WTC11 (cell line): ENCODE measurements at regions of chr16 and their contacts with region 1.

Region 1: DNA sequence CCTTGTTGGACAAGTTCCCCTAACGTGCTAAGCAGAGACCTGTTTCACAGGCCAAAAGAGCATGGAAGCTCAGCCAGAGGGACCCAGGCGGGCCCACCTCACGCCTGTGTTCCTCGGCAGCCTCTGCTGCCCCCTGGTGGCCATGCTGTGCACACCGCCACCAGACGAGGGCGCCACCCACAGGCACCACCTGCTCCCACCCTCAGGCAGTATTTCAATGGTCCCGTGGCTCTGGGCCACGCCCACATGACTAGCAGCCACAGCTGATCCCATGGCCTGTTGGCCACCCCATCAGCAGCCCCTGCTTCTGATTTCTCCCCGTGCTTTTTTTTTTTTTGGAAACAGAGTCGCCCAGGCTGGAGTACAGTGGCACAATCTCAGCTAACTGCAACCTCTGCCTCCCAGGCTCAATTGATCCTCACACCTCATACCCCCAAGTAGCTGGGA is 18.9 kb downstream of the MPG start:
- DNase-seq: peak; percentile 95
- ATAC-seq: peak; percentile 91
- H3K4me3 Mint-ChIP-seq: no peak overlapping the region
- H3K27ac Mint-ChIP-seq: no peak overlapping the region
- H3K4me1 Mint-ChIP-seq: no peaks in the 10 kb centered on the region; the same call in 1 of the 2 replicates
- H3K27me3 Mint-ChIP-seq: no peaks in the 10 kb centered on the region
- CTCF ChIP-seq: peak; percentile 100

Region 2: DNA sequence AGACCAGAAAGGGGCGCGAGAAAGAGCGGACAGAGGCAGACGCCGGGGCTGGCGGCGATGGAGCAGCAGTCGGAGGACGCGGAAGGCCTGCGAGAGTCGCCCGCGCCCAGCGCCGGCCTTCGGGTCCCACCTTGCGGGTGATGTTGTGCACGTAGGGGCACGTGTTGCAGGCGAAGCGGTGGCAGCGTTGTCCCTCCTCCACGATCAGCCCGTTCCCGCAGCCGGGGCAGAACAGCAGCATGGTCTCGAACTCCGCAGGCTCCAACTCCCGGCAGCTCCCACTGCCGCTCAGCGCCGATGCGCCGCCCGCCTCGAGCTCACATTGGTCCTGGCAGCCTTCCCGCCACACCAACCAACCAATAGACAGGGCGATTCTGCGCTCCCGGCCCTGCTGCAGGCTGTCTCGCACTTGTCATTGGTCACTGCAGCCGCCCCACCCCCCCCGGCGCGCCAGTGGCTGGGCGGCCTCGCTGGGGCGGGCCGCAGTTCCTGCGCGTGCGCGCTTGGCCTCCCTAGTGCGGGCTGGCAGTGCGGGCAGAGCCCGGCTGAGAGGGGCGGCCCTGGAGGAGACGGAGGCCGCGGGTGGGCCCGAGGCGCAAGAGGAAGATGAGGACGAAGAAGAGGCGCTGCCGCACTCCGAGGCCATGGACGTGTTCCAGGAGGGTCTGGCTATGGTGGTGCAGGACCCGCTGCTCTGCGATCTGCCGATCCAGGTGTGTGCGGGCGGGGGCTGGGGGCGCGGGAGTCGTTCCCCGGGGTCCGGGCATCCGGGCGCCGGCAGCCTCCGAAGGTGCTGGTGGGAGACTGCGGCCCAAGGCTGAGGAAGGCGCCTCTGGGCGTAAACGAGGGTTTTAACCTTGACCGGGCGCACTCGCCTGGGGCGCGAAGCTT is 43.4 kb before region 1 on chr16 and contains the starts of genes POLR3K and SNRNP25:
- CTCF ChIA-PET with region 1: interaction called, 25 read pairs
- POLR2A ChIA-PET with region 1: no interaction called
- DNase-seq: peak; percentile 98
- ATAC-seq: peak; percentile 98
- H3K4me3 Mint-ChIP-seq: peak within 1 kb of the TSS; percentile 99
- H3K27ac Mint-ChIP-seq: peak within 1 kb of the TSS; percentile 99
- H3K4me1 Mint-ChIP-seq: peaks cover 13% of the 10 kb centered on the region
- H3K27me3 Mint-ChIP-seq: no peaks in the 10 kb centered on the region; the same call in 1 of the 2 replicates
- CTCF ChIP-seq: no peak
- total RNA-seq, gene POLR3K: 37.9 to 40.1 TPM (median 38.6 TPM) in 3 replicates
- total RNA-seq, gene SNRNP25: 51.6 to 55.9 TPM (median 54.7 TPM) in 3 replicates

Region 3: GRCh38 chr16:77807-78443 is 19.0 kb before region 1 on chr16 and contains the start of gene MPG:
- CTCF ChIA-PET with region 1: interaction called, 493 read pairs
- POLR2A ChIA-PET with region 1: interaction called, 6 read pairs
- DNase-seq: peak; percentile 75
- ATAC-seq: peak; percentile 49
- H3K4me3 Mint-ChIP-seq: peak within 1 kb of the TSS; percentile 82
- H3K27ac Mint-ChIP-seq: no peak within 1 kb of the TSS; the same call in 1 of the 2 replicates
- H3K4me1 Mint-ChIP-seq: peaks cover 54% of the 10 kb centered on the region
- H3K27me3 Mint-ChIP-seq: no peaks in the 10 kb centered on the region; the same call in 1 of the 2 replicates
- CTCF ChIP-seq: no peak
- total RNA-seq, gene MPG: 60.0 to 62.0 TPM (median 60.0 TPM) in 3 replicates

Region 4: DNA sequence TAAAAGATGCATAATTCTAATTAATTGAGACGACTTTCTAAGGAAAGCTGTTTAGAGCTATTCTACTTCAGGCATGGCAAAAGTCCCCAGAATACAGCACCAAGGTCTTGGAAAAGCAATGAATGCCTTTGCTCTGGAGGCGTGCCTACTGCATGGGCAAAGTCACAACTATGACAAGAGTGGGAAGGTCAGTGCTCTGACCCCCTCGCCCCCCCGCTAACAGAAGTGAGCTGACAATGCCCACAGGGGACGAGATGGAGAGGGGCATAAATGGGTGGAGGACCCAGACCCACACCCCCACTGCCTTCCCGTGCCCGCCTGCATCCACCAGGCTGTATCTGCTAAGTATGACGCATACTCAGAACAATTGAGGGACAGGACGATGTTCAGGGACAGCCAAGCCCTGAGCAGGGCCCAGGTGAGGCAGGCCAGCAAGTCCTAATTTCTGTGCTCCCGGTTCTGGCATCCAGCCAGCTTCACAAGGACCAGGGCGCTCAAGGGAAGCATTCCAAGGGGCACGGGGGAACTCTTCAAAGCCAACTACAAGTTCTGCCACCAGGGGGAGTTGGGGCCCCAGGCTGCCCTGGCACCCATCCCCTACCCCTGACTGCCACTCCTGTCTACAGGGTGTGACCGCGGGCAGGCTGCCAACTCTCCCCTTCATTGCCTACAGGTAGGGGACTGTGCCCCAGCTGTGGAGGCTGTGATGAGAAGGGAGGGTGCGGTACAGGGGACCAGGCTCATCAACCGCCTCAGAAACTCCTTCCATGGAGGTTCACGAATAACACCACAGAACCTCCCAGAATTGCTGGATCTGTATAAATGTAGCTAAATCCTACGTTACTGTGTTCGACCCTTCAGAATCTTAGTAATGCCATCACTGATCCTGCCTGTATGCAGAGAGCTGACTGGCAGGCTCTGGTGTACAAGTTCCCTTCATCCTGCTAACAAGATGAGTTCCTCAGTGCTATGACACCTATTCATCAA is 20.7 kb after region 1 on chr16:
- CTCF ChIA-PET with region 1: interaction called, 22 read pairs
- POLR2A ChIA-PET with region 1: no interaction called
- DNase-seq: peak; percentile 84
- ATAC-seq: peak; percentile 97
- H3K4me3 Mint-ChIP-seq: no peak overlapping the region
- H3K27ac Mint-ChIP-seq: no peak overlapping the region
- H3K4me1 Mint-ChIP-seq: peaks cover 5% of the 10 kb centered on the region
- H3K27me3 Mint-ChIP-seq: no peaks in the 10 kb centered on the region
- CTCF ChIP-seq: peak; percentile 92

Region 5: GRCh38 chr16:278863-279366 is 182.0 kb after region 1 on chr16:
- CTCF ChIA-PET with region 1: interaction called, 11 read pairs
- POLR2A ChIA-PET with region 1: no interaction called
- DNase-seq: no peak
- ATAC-seq: peak; percentile 22
- H3K4me3 Mint-ChIP-seq: no peak overlapping the region
- H3K27ac Mint-ChIP-seq: no peak overlapping the region
- H3K4me1 Mint-ChIP-seq: no peaks in the 10 kb centered on the region; the same call in 1 of the 2 replicates
- H3K27me3 Mint-ChIP-seq: peaks cover 51% of the 10 kb centered on the region
- CTCF ChIP-seq: no peak

Region 6: DNA sequence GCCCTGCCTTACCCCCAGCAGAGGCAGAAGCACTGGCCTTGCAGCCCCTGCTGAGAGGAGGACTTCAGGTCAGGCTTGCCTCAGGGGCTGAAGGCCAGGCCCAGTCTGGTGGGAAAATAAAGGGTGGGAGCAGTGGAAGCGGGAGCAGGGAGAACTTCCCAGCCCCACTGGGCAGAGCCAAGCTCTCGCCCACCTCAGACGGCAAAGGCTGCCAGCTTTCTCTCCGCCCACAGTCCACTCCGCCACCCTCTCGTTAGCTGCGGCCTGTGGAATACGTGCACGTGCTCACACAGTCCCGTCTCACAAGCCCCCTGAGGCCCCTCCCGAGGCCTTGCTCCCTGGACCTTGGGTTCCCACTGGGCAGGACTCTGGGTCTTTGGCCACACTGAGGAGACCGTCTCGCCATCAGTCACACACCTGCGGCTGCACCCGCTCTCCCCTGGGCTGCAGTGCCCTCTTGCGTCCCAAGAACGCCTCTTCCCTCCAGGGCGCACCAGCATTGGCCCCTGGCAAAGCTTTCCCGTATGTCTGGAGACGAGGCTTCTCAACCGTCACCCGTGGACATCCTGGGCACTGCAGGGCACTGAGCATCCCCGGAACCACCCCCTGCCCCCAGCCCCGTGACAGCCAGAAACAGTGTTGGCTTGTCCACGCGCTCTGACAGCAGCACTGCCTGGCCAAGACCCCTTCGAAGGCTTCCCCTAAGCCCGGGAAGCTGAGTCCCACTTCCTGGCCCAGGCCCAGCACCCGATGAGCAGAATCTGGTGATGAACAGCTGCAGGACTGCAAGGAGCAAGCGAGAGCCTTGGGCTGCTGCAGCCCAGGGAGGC is 265.1 kb after region 1 on chr16:
- CTCF ChIA-PET with region 1: interaction called, 14 read pairs
- POLR2A ChIA-PET with region 1: no interaction called
- DNase-seq: peak; percentile 83
- ATAC-seq: peak; percentile 79
- H3K4me3 Mint-ChIP-seq: no peak overlapping the region
- H3K27ac Mint-ChIP-seq: no peak overlapping the region
- H3K4me1 Mint-ChIP-seq: no peaks in the 10 kb centered on the region
- H3K27me3 Mint-ChIP-seq: no peaks in the 10 kb centered on the region
- CTCF ChIP-seq: 0 out of 2 replicates have a peak, but pooled peaks have one; percentile 30